GM12878 (cell line): ENCODE measurements at regions of chr14 and their contacts with region 1.

Region 1: GRCh38 chr14:36373982-36374673 is 53.7 kb upstream of the MBIP start:
- DNase-seq: peak; percentile 30
- ATAC-seq: peak; percentile 99
- H3K4me3 ChIP-seq: no peak overlapping the region
- H3K27ac ChIP-seq: no peak overlapping the region
- H3K4me1 ChIP-seq: no peaks in the 10 kb centered on the region
- H3K27me3 ChIP-seq: no peaks in the 10 kb centered on the region
- CTCF ChIP-seq: peak; percentile 84 to 90 (median 89)
- EP300 ChIP-seq: 0 out of 4 replicates have a peak, but pooled peaks of 1 of the 2 experiments have one; percentile 36
- POLR2A ChIP-seq: no peak
- RAD21 ChIP-seq: peak; percentile 81

Region 2: GRCh38 chr14:35890308-35890707 is 483.8 kb before region 1 on chr14:
- CTCF ChIA-PET with region 1: no interaction called
- POLR2A ChIA-PET with region 1: no interaction called
- RAD21 ChIA-PET with region 1: no interaction called
- SMC1A ChIA-PET with region 1: no interaction called
- in situ Hi-C with region 1: loop called (anchors 5 kb)
- intact Hi-C with region 1: no loop called
- DNase-seq: no peak
- ATAC-seq: no peak
- H3K4me3 ChIP-seq: no peak overlapping the region
- H3K27ac ChIP-seq: no peak overlapping the region
- H3K4me1 ChIP-seq: no peaks in the 10 kb centered on the region
- H3K27me3 ChIP-seq: no peaks in the 10 kb centered on the region
- CTCF ChIP-seq: no peak
- EP300 ChIP-seq: no peak
- POLR2A ChIP-seq: no peak
- RAD21 ChIP-seq: no peak

Region 3: GRCh38 chr14:35963209-35963608 is 410.9 kb before region 1 on chr14:
- CTCF ChIA-PET with region 1: interaction called, 3 read pairs
- POLR2A ChIA-PET with region 1: no interaction called
- RAD21 ChIA-PET with region 1: interaction called, 4 read pairs
- SMC1A ChIA-PET with region 1: interaction called, 3 read pairs
- in situ Hi-C with region 1: no loop called
- intact Hi-C with region 1: loop called (anchors 10 kb)
- DNase-seq: no peak
- ATAC-seq: peak; percentile 78
- H3K4me3 ChIP-seq: no peak overlapping the region
- H3K27ac ChIP-seq: no peak overlapping the region
- H3K4me1 ChIP-seq: no peaks in the 10 kb centered on the region
- H3K27me3 ChIP-seq: no peaks in the 10 kb centered on the region
- CTCF ChIP-seq: peak; percentile 33 to 53 (median 33); a peak in 5 of 6 replicates
- EP300 ChIP-seq: no peak
- POLR2A ChIP-seq: no peak
- RAD21 ChIP-seq: peak; percentile 33; the same call in 1 of the 2 replicates

Region 4: DNA sequence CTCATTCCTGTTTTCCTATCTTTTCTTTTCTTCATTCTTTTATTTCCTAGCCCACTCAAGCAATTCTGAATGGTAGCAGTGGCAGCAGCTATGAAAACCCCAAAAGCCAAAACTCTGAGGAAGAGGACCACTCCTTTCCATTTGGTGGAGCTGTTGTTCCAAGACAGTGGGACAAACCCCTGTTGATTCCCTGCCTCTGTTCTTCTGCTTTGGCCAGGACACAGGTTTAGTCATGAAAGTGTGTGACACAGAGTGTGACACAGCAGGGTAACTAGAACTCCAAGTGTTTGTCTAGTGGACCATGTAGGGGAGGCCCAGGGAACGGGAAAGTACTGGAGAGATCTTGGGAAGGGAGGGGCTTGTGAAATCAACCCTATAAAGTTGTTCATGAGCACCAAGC is 268.7 kb before region 1 on chr14:
- CTCF ChIA-PET with region 1: interaction called, 3 read pairs
- POLR2A ChIA-PET with region 1: no interaction called
- RAD21 ChIA-PET with region 1: interaction called, 11 read pairs
- SMC1A ChIA-PET with region 1: interaction called, 3 read pairs
- in situ Hi-C with region 1: no loop called
- intact Hi-C with region 1: loop called (anchors 1 kb)
- DNase-seq: no peak
- ATAC-seq: no peak
- H3K4me3 ChIP-seq: no peak overlapping the region
- H3K27ac ChIP-seq: no peak overlapping the region
- H3K4me1 ChIP-seq: no peaks in the 10 kb centered on the region
- H3K27me3 ChIP-seq: no peaks in the 10 kb centered on the region
- CTCF ChIP-seq: peak in 1 of 3 experiments; percentile 34; a peak in 2 of 6 replicates
- EP300 ChIP-seq: no peak
- POLR2A ChIP-seq: no peak
- RAD21 ChIP-seq: peak; percentile 39; the same call in 1 of the 2 replicates

Region 5: GRCh38 chr14:36241183-36241582 is 132.9 kb before region 1 on chr14:
- CTCF ChIA-PET with region 1: interaction called, 13 read pairs
- POLR2A ChIA-PET with region 1: no interaction called
- RAD21 ChIA-PET with region 1: interaction called, 3 read pairs
- SMC1A ChIA-PET with region 1: interaction called, 7 read pairs
- in situ Hi-C with region 1: no loop called
- intact Hi-C with region 1: no loop called
- DNase-seq: no peak
- ATAC-seq: no peak
- H3K4me3 ChIP-seq: no peak overlapping the region
- H3K27ac ChIP-seq: no peak overlapping the region
- H3K4me1 ChIP-seq: no peaks in the 10 kb centered on the region
- H3K27me3 ChIP-seq: no peaks in the 10 kb centered on the region
- CTCF ChIP-seq: no peak; a peak in 1 of 6 replicates
- EP300 ChIP-seq: no peak
- POLR2A ChIP-seq: no peak
- RAD21 ChIP-seq: 0 out of 2 replicates have a peak, but pooled peaks have one; percentile 8

Region 6: DNA sequence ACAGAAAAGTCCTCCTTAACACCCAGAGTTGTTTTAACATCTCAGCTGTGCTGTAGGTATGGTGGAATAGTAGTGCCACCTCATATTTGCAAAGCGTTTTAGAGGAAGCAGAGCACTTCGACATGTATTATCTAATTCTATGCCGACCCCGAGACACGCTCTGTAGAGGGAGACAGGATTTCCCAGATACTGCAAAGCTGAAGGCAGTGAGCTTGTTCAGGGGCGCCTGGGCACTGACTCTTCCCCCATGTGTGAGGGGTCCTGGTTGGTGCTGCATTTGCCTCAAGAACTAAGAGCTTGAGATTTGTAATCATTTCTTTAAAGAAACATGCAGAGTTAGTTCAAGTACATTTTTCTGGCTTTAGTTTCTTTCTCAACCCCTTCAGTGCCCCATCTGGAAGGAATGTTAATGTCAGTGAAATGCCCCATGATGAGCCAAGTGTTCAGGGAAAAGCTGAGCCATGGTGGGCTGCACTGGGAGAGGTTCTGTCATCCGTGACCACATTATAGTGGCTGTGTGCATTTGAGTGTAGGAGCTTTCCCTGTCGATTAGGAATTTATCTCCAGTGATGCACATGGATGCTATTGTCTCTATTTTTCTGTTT is 120.0 kb before region 1 on chr14:
- CTCF ChIA-PET with region 1: no interaction called
- POLR2A ChIA-PET with region 1: no interaction called
- RAD21 ChIA-PET with region 1: interaction called, 3 read pairs
- SMC1A ChIA-PET with region 1: no interaction called
- in situ Hi-C with region 1: no loop called
- intact Hi-C with region 1: loop called (anchors 10 kb)
- DNase-seq: no peak
- ATAC-seq: no peak
- H3K4me3 ChIP-seq: no peak overlapping the region
- H3K27ac ChIP-seq: no peak overlapping the region
- H3K4me1 ChIP-seq: no peaks in the 10 kb centered on the region
- H3K27me3 ChIP-seq: no peaks in the 10 kb centered on the region
- CTCF ChIP-seq: no peak
- EP300 ChIP-seq: no peak
- POLR2A ChIP-seq: no peak
- RAD21 ChIP-seq: no peak

Region 7: DNA sequence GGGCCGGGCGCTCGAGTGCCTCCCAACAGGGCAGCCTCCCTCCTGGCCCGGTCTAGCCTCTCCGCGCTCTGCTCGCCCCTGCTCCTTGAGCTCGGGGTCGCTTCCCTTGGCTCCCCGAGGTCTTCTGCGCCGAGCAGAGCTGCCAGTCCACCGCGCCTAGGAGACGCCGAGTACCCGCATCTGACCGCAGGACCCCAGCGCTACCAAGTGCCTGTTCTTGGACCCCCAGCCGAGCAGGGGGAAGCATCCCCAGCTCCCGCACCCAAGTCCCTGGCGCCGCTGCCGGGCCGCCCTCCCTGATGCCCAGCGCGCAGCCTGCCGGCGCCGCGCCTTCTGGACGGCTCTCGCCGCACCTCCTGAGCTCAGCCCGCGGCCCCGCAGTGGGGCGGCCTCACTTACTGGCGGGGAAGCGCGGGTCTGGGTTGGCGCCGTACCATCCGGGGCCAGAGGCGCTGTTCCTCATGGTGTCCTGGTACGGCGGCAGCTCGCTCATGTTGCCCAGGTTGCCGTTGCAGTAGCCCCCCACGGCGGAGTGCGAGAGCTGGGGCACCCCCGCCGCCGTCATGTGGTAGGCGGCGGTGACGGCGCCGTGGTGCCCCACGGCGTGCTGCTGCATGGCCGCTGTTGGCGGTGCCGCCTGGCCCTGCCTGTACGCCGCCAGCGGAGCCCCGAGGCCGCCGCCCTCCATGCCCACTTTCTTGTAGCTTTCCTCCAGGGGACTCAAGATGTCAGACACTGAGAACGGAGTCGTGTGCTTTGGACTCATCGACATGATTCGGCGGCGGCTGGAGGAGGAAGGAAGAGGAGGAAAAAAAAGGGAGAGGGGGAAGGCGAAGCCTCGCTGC is 144.7 kb after region 1 on chr14:
- CTCF ChIA-PET with region 1: no interaction called
- POLR2A ChIA-PET with region 1: no interaction called
- RAD21 ChIA-PET with region 1: no interaction called
- SMC1A ChIA-PET with region 1: no interaction called
- in situ Hi-C with region 1: no loop called
- intact Hi-C with region 1: no loop called
- DNase-seq: no peak
- ATAC-seq: peak; percentile 79
- H3K4me3 ChIP-seq: no peak overlapping the region
- H3K27ac ChIP-seq: no peak overlapping the region
- H3K4me1 ChIP-seq: no peaks in the 10 kb centered on the region
- H3K27me3 ChIP-seq: peaks cover 19 to 32% of the 10 kb centered on the region in 2 experiments
- CTCF ChIP-seq: no peak
- EP300 ChIP-seq: no peak
- POLR2A ChIP-seq: no peak
- RAD21 ChIP-seq: no peak